ENCODE measurements at regions of chr9 and their contacts with region 1.

Region 1: DNA sequence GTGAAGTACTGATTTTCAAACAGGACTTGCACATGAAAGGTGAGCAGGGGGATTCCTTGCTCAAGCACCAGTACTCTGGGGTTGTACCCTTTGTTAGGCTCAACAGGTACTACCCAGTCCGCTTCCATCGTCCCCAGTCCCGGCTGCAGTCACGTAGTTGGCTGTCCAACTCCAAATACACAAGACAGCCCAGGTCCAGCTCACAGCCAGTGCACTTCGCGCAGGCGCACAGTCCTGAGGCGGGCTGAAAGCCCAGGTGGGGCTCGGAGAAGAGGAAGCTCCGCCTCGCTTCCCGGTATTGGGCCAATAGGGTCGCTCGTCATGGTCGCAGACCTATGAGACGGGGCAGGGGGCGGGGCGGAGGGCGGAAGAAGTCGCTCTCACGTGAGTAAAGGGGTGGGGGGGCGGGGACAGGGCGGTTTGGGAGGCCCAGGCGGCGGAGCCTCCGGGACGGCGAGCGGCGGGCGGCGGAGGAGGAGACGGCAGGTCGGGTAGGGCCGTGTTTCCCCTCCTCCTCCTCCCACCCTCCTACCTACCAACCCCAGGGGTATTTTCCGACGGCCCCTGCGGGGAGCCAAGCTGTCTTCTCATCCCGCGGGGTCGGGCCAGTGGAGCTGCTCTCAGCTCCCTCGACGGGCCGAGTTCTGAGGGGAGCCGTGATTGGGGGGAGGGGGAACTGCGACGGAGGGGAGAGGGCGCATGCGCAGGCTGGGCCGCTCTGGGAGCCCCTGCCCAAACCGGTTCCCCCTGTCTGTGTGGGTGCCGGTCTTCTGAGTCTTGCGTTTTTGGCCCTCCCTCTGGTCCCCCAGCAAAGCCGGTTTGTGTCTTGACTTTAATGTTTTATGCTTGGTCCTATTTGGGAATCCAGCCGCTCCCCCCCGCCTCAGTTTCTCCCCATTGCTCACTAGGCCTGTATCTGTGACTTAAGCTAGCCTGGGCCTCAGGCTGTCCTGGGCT is at the start of gene RABGAP1:
- DNase-seq: peak; percentile 95 to 99 (median 99)
- ATAC-seq: peak; percentile 98
- H3K4me3 ChIP-seq: peak within 1 kb of the TSS; percentile 79 to 98
- H3K4me3 Mint-ChIP-seq: peak within 1 kb of the TSS; percentile 97
- H3K27ac ChIP-seq: peak within 1 kb of the TSS; percentile 64 to 88
- H3K27ac Mint-ChIP-seq: peak within 1 kb of the TSS; percentile 92
- H3K4me1 ChIP-seq: peaks cover 18% of the 10 kb centered on the region
- H3K4me1 Mint-ChIP-seq: peaks cover 44% of the 10 kb centered on the region
- H3K27me3 ChIP-seq: no peaks in the 10 kb centered on the region
- H3K27me3 Mint-ChIP-seq: no peaks in the 10 kb centered on the region
- CTCF ChIP-seq: no peak
- total RNA-seq, gene RABGAP1: 20.2 to 21.0 TPM

Region 2: DNA sequence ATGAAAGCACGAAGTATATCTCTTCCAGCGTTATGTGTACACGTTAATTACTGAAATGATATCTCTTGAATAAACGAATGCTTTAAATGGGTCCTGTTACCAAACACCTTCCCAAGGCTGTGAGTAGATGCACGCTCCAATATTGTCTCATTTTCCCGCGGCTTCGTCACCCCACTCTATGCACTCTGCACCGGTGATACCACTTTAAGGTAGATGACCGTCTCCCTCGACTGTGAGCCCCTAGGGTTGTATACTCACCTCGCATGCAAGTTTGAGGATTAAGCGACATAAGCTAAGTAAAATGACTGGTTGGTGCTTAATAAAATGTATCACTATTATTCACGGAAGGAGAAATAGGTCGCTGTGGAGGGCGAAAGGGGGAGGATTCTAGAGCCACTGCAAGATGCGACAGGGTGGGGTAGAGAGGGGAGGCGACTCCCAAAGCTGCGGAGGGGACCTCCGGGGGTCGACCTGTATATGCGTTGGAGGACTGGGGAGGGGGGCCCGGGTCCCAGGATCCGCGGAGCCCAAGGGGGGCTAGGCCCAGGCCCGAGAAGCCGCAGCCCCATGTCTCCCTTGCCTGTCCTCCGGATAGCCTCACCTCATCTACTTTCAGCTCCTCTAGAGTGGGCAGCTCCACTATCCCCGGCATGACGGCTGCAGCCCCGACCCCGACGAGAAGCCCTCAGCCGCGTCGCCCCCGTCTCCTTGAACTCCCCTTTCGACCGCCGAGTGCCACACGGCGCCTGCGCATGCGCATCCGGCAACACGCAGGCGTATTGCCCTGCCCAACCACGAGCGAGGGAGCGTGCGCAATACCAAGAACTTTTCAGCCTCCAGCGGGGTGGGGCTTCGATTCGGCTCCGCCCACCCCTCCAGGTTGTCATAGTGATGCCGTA is 781.6 kb before region 1 on chr9 and contains the starts of genes MORN5 and NDUFA8:
- CTCF ChIA-PET with region 1: no interaction called
- POLR2A ChIA-PET with region 1: no interaction called
- intact Hi-C with region 1: loop called in 1 of 2 experiments (anchors 10 kb)
- DNase-seq: peak; percentile 90 to 98 (median 96)
- ATAC-seq: peak; percentile 96
- H3K4me3 ChIP-seq: peak within 1 kb of the TSS; percentile 68 to 99
- H3K4me3 Mint-ChIP-seq: peak within 1 kb of the TSS; percentile 99
- H3K27ac ChIP-seq: peak within 1 kb of the TSS; percentile 74 to 86
- H3K27ac Mint-ChIP-seq: peak within 1 kb of the TSS; percentile 98
- H3K4me1 ChIP-seq: peaks cover 27% of the 10 kb centered on the region
- H3K4me1 Mint-ChIP-seq: peaks cover 42% of the 10 kb centered on the region
- H3K27me3 ChIP-seq: no peaks in the 10 kb centered on the region
- H3K27me3 Mint-ChIP-seq: peaks cover 14% of the 10 kb centered on the region
- CTCF ChIP-seq: no peak
- total RNA-seq, gene MORN5: not detected
- total RNA-seq, gene NDUFA8: 5.7 to 7.0 TPM

Region 3: GRCh38 chr9:122264360-122265148 is 676.3 kb before region 1 on chr9 and contains the starts of genes MRRF and RBM18:
- CTCF ChIA-PET with region 1: no interaction called
- POLR2A ChIA-PET with region 1: no interaction called
- intact Hi-C with region 1: loop called in 1 of 2 experiments (anchors 10 kb)
- DNase-seq: peak; percentile 80 to 95 (median 87)
- ATAC-seq: peak; percentile 84
- H3K4me3 ChIP-seq: peak within 1 kb of the TSS; percentile 79 to 91
- H3K4me3 Mint-ChIP-seq: peak within 1 kb of the TSS; percentile 95
- H3K27ac ChIP-seq: peak within 1 kb of the TSS; percentile 95 to 99
- H3K27ac Mint-ChIP-seq: peak within 1 kb of the TSS; percentile 98
- H3K4me1 ChIP-seq: peaks cover 38% of the 10 kb centered on the region
- H3K4me1 Mint-ChIP-seq: peaks cover 60% of the 10 kb centered on the region
- H3K27me3 ChIP-seq: no peaks in the 10 kb centered on the region
- H3K27me3 Mint-ChIP-seq: no peaks in the 10 kb centered on the region
- CTCF ChIP-seq: no peak
- total RNA-seq, gene MRRF: 22.9 to 23.2 TPM
- total RNA-seq, gene RBM18: 34.0 to 38.9 TPM

Region 4: DNA sequence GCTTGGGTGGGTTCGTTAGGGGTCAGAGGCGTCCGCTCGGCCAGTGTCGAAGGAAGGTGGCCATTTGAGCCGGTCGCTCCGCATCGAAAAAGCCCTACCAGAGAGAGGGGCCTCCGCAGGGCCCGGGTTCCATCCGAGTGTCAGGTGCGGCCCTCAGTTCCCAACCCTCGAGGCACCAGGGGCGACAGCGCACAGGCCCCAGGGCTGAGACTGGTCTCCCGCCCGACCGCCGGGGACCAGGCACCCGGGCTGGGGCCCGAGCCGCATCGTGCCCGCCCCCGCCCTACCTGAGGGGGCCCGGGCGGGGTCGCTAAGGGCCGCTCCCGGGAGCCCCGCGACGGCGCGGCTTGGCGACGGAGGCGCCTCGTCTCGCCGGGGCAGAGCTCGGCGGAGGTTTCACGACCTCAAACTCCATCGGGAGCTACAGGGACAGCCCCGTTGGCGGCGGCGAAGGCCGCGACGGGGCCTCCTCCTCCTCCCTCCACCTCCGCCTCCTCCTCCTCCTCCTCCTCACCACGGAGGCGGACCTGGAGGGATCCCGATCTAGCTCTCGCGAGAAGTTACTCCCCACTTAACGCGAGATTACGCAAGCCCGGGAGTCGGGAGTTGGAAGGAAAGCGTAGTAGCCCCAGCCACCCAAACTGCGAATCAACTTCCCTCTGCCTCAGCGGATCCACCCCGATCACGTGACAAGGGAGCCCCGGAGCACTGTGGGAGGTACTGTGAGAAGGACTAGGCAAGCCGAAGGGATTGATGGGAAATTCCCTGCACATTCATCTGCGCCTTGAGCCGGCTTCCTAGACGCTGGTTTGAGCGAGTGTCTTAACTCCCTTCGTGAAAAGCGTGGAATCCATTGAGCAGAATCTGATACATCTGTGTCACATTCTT is 35.8 kb before region 1 on chr9 and contains the start of gene RC3H2:
- CTCF ChIA-PET with region 1: interaction called, 5 read pairs
- POLR2A ChIA-PET with region 1: interaction called, 19 read pairs
- intact Hi-C with region 1: loop called (anchors 1 kb)
- DNase-seq: peak; percentile 92 to 100 (median 97)
- ATAC-seq: peak; percentile 91
- H3K4me3 ChIP-seq: peak within 1 kb of the TSS; percentile 66 to 92
- H3K4me3 Mint-ChIP-seq: peak within 1 kb of the TSS; percentile 94
- H3K27ac ChIP-seq: peak within 1 kb of the TSS; percentile 67 to 94
- H3K27ac Mint-ChIP-seq: peak within 1 kb of the TSS; percentile 98
- H3K4me1 ChIP-seq: peaks cover 32% of the 10 kb centered on the region
- H3K4me1 Mint-ChIP-seq: peaks cover 26% of the 10 kb centered on the region
- H3K27me3 ChIP-seq: no peaks in the 10 kb centered on the region
- H3K27me3 Mint-ChIP-seq: no peaks in the 10 kb centered on the region
- CTCF ChIP-seq: no peak
- total RNA-seq, gene RC3H2: 77.6 to 79.5 TPM

Region 5: GRCh38 chr9:122912964-122913673 is 27.8 kb before region 1 on chr9 and contains the start of gene ZBTB6:
- CTCF ChIA-PET with region 1: no interaction called
- POLR2A ChIA-PET with region 1: interaction called, 13 read pairs
- intact Hi-C with region 1: loop called (anchors 2 kb)
- DNase-seq: peak; percentile 50 to 90 (median 68)
- ATAC-seq: peak; percentile 97
- H3K4me3 ChIP-seq: peak within 1 kb of the TSS; percentile 80 to 86
- H3K4me3 Mint-ChIP-seq: peak within 1 kb of the TSS; percentile 98
- H3K27ac ChIP-seq: peak within 1 kb of the TSS; percentile 70 to 92
- H3K27ac Mint-ChIP-seq: peak within 1 kb of the TSS; percentile 94
- H3K4me1 ChIP-seq: peaks cover 15% of the 10 kb centered on the region
- H3K4me1 Mint-ChIP-seq: peaks cover 36% of the 10 kb centered on the region
- H3K27me3 ChIP-seq: no peaks in the 10 kb centered on the region
- H3K27me3 Mint-ChIP-seq: no peaks in the 10 kb centered on the region
- CTCF ChIP-seq: no peak
- total RNA-seq, gene ZBTB6: 3.6 to 3.7 TPM